ENCODE measurements at regions of chr3 and their contacts with region 1.

Region 1: GRCh38 chr3:186783073-186783730 is at the start of gene EIF4A2:
- DNase-seq: peak; percentile 93
- ATAC-seq: peak; percentile 76
- H3K4me3 Mint-ChIP-seq: peak within 1 kb of the TSS; percentile 91
- H3K27ac Mint-ChIP-seq: peak within 1 kb of the TSS; percentile 97
- H3K4me1 Mint-ChIP-seq: peaks cover 37% of the 10 kb centered on the region
- H3K27me3 Mint-ChIP-seq: no peaks in the 10 kb centered on the region
- total RNA-seq, gene EIF4A2: 365 to 383 TPM

Region 2: DNA sequence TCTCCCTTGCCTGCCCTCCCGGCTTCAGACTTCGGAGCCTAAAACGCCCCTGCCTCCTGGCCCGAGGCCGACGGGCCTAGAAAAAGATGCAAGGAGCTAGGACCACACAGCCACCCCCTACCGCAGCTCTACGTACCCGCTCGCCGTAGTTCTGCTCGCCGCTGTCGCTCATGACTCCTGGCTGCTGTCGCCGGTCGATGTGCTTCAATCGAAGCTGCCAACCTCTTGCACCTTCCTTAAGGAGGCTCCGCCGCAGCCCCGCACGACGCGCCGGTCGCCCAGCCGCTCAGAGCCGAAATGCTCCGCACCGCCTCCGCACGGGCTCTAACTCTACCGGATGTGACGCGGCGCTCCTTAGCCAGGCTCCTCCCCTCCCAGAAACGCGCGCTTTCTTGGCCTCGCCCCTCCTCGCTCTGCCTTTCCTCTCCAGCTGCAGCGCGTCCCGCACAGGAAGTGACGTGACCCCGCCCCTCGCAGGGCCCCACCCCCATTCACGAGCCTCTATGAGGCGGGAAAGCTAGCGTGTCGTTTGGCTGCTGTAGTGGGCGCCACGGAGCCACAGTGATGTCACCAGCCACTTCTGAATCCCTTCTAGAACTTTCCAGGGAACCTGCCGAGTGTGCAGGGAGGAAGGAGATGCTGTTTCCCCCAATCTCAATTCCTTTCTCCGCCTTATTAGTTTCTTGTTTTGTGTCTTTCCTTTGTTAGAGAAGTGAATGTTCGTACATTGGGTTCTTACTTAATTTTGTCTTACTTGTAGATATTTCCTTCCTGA is 845.3 kb before region 1 on chr3 and contains the start of gene TRA2B:
- CTCF ChIA-PET with region 1: no interaction called
- POLR2A ChIA-PET with region 1: interaction called, 43 read pairs
- DNase-seq: peak; percentile 99
- ATAC-seq: peak; percentile 86
- H3K4me3 Mint-ChIP-seq: peak within 1 kb of the TSS; percentile 100
- H3K27ac Mint-ChIP-seq: peak within 1 kb of the TSS; percentile 100
- H3K4me1 Mint-ChIP-seq: peaks cover 23% of the 10 kb centered on the region
- H3K27me3 Mint-ChIP-seq: peaks cover 7% of the 10 kb centered on the region
- total RNA-seq, gene TRA2B: 271 to 277 TPM

Region 3: GRCh38 chr3:186772701-186773424 is 10.3 kb before region 1 on chr3:
- CTCF ChIA-PET with region 1: interaction called, 6 read pairs
- POLR2A ChIA-PET with region 1: interaction called, 131 read pairs
- DNase-seq: peak; percentile 80
- ATAC-seq: peak; percentile 94
- H3K4me3 Mint-ChIP-seq: peak overlapping the region; percentile 76
- H3K27ac Mint-ChIP-seq: peak overlapping the region; percentile 88
- H3K4me1 Mint-ChIP-seq: peaks cover 22% of the 10 kb centered on the region
- H3K27me3 Mint-ChIP-seq: peaks cover 3% of the 10 kb centered on the region

Region 4: DNA sequence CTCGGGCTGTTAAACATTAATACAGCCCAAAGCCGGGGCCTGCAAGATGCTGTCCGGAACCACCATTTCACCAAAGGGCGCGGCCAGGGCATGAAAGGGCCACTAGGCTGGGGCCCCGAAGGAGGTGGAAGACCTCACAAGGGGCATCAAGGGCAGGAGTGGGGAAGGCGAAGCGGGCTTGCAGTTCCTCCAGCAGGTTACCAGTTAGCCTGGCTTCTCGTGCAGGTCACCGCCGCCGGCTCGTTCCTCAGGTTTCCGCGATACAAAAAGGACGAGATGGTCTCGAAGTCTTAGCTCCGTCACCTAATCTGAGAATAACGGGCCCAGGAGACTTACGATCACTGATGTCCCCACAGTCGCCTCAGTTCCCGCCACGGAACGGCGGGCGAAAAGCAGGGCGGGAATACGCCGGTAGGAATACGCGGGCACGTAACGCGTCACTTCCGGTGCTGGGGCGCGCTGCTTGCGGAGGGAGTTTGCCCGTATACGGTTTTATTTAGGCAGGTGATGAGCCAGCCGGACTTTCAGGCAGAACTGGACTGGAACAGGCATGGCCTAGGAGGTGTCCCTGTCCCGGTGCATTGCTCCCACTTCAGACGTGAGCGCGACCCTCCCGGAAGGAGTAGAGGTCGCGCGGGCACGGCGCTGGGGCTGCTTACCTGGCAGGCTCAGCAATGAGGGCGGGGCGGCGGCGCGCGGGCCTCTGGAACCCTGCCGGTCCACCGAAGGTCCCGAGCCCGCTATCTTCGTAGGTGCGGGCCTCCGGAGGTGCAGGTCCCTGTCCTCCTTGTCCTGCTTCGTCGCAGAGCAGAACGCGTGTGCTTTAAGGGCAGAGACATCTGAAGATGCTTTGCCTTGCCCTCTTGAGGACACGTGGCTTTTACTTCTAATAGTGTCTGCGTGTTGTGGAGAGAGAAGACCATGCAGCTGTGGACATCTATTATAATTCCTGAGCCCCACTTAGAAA is 23.2 kb after region 1 on chr3 and contains the start of gene RFC4:
- CTCF ChIA-PET with region 1: interaction called, 4 read pairs
- POLR2A ChIA-PET with region 1: interaction called, 123 read pairs
- DNase-seq: peak; percentile 90
- ATAC-seq: peak; percentile 79
- H3K4me3 Mint-ChIP-seq: peak within 1 kb of the TSS; percentile 96
- H3K27ac Mint-ChIP-seq: peak within 1 kb of the TSS; percentile 96
- H3K4me1 Mint-ChIP-seq: peaks cover 47% of the 10 kb centered on the region
- H3K27me3 Mint-ChIP-seq: no peaks in the 10 kb centered on the region
- total RNA-seq, gene RFC4: 98.9 to 106 TPM

Region 5: DNA sequence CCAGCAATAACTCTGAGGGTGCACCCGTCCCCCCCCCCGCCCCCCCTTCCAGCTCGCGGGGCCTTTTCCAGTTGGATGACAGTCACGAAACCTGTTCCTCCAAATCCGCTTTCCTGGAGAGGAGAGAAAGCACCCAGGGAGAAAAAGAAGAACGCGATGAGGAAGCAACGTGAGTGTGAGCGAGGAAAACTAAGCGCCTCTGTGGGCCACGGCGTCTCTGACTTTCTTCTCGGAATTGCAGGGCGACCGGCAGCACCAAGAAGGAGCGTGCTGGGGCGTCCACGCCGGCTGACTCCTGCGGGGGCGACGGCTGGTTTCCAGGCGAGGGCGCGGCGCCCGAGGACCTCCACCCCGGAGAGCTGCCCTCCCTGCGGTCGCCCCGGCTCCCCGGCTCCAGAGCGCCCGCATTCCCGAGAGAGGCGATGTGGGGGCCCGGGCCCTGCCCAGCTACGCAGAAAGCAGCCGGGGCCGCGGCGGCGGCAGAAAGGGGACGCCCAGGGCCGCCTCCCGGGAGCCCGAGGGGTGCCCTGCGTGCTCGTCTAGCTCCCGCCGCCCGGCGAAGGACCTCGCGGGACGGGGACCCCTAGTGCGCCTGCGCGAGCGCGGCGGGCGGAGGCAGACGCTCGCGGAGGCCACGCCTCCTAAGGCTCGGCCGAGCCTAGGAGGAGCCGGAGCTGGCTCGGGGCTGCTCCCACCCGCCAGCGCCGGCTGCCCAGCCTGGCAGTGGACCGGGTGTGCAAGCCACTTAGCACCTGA is 44.0 kb after region 1 on chr3:
- CTCF ChIA-PET with region 1: interaction called, 6 read pairs
- POLR2A ChIA-PET with region 1: interaction called, 54 read pairs
- DNase-seq: peak; percentile 87
- ATAC-seq: peak; percentile 97
- H3K4me3 Mint-ChIP-seq: peak overlapping the region; percentile 70
- H3K27ac Mint-ChIP-seq: peak overlapping the region; percentile 72
- H3K4me1 Mint-ChIP-seq: peaks cover 34% of the 10 kb centered on the region
- H3K27me3 Mint-ChIP-seq: peaks cover 44% of the 10 kb centered on the region